Activated CD4-positive, alpha-beta T cell treated with anti-CD3 and anti-CD28 coated beads for 36 hours (primary cell): ENCODE measurements at regions of chr3 and their contacts with region 1.

Region 1: DNA sequence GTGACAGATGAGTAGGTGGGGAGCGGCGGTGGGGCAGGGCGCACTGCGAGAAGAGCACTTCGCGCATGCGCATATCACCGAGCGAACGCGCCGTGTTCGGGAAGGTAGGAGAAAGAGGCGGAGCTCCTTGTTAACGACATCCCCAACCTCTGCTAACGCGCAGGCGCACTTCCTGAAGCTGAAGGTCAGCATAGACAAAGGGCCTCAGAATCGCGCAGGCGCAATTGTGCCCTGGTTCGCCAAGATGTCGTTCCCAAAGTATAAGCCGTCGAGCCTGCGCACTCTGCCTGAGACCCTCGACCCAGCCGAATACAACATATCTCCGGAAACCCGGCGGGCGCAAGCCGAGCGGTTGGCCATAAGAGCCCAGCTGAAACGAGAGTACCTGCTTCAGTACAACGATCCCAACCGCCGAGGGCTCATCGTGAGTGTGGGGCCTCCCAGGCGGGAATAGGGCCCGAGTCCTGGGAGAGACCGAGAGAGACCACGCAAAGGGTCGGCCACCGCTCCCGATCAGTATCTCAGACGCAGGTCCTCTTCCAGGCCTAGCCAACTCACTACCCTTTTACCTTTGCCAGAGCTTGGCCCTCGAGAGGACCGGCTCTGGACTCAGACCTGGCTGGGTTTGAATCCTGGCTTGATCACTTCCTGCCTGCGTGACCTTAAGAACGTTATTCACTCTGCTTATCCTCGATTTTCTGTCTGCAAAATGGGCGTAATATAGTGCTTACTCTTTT is at the start of gene NDUFB4:
- DNase-seq: peak; percentile 98
- ATAC-seq: peak; percentile 94
- H3K4me3 Mint-ChIP-seq: no peak within 1 kb of the TSS
- H3K27ac Mint-ChIP-seq: peak within 1 kb of the TSS; percentile 94
- H3K4me1 Mint-ChIP-seq: peaks cover 10% of the 10 kb centered on the region
- H3K27me3 Mint-ChIP-seq: no peaks in the 10 kb centered on the region
- total RNA-seq, gene NDUFB4: 157 to 186 TPM

Region 2: GRCh38 chr3:120558771-120559241 is 37.5 kb before region 1 on chr3:
- CTCF ChIA-PET with region 1: interaction called, 20 read pairs
- POLR2A ChIA-PET with region 1: no interaction called
- intact Hi-C with region 1: loop called in 1 of 2 experiments (anchors 1 kb)
- DNase-seq: peak; percentile 93
- ATAC-seq: peak; percentile 68
- H3K4me3 Mint-ChIP-seq: peak overlapping the region; percentile 56
- H3K27ac Mint-ChIP-seq: peak overlapping the region; percentile 10
- H3K4me1 Mint-ChIP-seq: peaks cover 12% of the 10 kb centered on the region
- H3K27me3 Mint-ChIP-seq: peaks cover 6% of the 10 kb centered on the region

Region 3: DNA sequence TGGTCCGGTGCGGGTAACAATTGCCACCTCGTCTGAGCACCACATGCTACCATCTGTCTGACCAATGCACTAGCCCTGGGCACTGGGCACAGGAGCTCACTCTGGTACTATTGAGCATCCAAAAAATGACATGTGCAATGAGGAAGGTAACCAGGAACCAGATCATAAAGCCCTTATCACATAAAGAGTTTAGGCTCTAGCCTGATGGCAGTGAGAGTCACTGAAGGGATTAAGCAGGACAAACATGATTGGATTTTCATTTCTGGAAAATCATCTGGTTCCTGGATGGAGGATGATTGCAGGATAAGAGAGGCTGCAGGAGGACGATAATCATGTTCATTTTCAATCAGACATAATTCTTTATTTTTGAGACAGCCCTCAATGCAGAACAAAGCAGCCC is 12.2 kb after region 1 on chr3:
- CTCF ChIA-PET with region 1: interaction called, 3 read pairs
- POLR2A ChIA-PET with region 1: interaction called, 10 read pairs
- intact Hi-C with region 1: no loop called
- DNase-seq: no peak
- ATAC-seq: no peak
- H3K4me3 Mint-ChIP-seq: no peak overlapping the region
- H3K27ac Mint-ChIP-seq: no peak overlapping the region
- H3K4me1 Mint-ChIP-seq: no peaks in the 10 kb centered on the region
- H3K27me3 Mint-ChIP-seq: no peaks in the 10 kb centered on the region

Region 4: DNA sequence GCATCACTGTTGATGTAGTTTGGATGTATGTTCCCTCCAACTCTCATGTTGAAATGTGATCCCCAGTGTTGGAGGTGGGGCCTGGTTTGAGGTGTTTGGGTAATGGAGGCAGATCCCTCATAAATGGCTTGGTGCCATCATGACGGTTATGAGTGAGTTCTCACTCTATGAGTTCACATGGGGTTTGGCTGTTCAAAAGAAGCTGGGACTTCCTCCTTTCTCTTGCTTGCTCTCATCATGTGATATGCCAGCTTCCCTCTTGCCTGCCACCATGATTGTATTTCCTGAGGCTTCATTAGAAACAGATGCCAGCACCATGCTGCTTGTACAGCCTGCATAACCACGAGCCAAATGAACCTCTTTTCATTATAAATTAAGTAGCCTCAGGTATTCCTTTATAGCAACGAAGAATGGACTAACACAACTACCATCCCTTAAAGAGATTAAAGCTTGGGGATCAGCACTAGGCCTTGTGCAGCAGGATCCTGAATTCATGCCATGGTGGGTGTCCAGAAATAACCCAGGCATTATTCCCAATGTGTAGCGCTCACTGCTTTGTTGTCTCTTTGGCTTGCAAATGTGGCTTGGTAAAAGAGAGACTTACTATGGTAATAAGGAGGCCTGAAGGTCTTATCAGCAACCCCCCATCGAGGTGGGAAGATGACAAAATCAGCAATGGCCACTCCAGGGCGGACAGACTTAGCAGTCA is 41.7 kb after region 1 on chr3:
- CTCF ChIA-PET with region 1: no interaction called
- POLR2A ChIA-PET with region 1: no interaction called
- intact Hi-C with region 1: no loop called
- DNase-seq: no peak
- ATAC-seq: no peak
- H3K4me3 Mint-ChIP-seq: no peak overlapping the region
- H3K27ac Mint-ChIP-seq: no peak overlapping the region
- H3K4me1 Mint-ChIP-seq: peaks cover 10% of the 10 kb centered on the region
- H3K27me3 Mint-ChIP-seq: no peaks in the 10 kb centered on the region

Region 5: DNA sequence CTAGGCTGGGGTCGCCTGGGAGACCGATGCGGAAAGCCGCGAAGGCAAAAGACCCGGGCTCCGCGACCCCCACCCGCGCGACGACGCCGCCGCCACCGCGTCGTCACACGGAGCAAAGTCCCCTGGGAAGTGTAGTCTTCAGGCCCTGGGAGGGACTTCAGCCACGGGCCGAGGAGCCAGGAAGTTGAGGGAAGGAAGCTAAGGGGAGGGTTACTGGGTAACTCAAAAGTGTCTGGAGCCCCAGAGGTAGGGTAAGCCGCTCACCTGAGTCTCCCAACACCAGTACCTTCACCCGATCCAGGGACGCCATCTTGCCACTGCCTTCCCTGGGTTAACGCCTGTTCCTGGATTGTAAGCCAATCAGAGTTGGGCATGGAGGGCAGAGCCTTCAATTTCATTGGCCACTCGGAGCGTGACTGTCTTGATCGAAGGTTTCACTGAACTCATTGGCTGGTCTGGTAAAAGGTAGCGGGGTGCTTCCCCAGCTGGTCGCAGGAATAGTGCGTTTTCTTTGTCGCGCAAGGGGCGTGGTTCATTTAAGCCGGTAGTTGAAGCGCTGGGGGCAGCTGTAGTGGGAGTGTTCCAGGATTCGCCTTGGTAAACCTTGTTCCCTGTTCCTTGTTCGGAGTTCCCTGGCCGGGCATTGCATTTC is 146.0 kb after region 1 on chr3 and contains the starts of genes GTF2E1 and RABL3:
- CTCF ChIA-PET with region 1: interaction called, 3 read pairs
- POLR2A ChIA-PET with region 1: interaction called, 5 read pairs
- intact Hi-C with region 1: loop called (anchors 1 kb)
- DNase-seq: peak; percentile 96
- ATAC-seq: peak; percentile 99
- H3K4me3 Mint-ChIP-seq: peak within 1 kb of the TSS; percentile 98
- H3K27ac Mint-ChIP-seq: peak within 1 kb of the TSS; percentile 95
- H3K4me1 Mint-ChIP-seq: peaks cover 28% of the 10 kb centered on the region
- H3K27me3 Mint-ChIP-seq: no peaks in the 10 kb centered on the region
- total RNA-seq, gene GTF2E1: 26.1 to 27.0 TPM
- total RNA-seq, gene RABL3: 35.5 to 37.8 TPM

Region 6: DNA sequence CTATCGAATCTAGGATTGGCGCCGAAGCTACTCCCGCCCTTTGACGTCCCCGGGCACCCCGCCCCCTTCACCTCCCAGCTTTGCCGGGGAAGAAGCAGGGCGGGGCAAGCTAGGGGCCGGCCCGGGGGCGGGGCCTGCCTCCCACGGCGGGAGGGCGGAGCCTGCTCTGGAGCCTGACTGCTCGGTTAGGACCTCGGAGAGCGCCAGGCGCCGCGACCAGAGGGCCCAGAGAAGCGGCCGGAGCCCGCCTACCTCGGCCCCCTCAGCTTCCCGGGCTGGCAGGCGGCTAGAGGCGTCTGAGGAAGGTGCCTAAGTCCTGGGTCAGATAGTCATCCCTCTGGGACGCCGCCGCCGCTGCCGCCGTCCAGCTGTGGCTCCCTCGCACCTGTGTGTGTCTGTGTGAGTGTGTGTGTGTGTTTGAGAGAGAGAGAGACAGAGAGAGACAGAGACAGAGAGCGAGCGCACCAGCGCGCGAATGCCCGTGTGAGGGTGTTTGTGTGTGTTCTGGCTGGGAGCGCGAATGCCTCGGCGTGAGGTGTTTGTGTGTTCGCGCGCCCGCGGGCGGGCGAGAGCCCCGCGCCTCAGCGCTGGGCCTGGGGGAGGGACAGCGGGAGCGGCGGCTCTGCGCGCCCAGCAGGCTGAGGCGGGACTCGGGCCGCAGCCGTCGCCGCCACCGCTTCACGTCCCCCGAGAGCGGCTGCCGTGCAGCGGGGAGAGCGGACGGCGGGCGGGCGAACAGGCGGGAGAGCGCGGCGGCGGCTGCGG is 311.9 kb after region 1 on chr3 and contains the start of gene STXBP5L:
- CTCF ChIA-PET with region 1: no interaction called
- POLR2A ChIA-PET with region 1: no interaction called
- intact Hi-C with region 1: loop called in 1 of 2 experiments (anchors 1 kb)
- DNase-seq: peak; percentile 83
- ATAC-seq: peak; percentile 97
- H3K4me3 Mint-ChIP-seq: peak within 1 kb of the TSS; percentile 69
- H3K27ac Mint-ChIP-seq: no peak within 1 kb of the TSS
- H3K4me1 Mint-ChIP-seq: peaks cover 16% of the 10 kb centered on the region
- H3K27me3 Mint-ChIP-seq: peaks cover 46% of the 10 kb centered on the region
- total RNA-seq, gene STXBP5L: not detected